Endothelial cell of umbilical vein (primary cell): ENCODE measurements at regions of chr1 and their contacts with region 1.

Region 1: GRCh38 chr1:72075425-72075824 is 206.9 kb downstream of the NEGR1 start:
- DNase-seq: no peak
- H3K4me3 ChIP-seq: no peak overlapping the region
- H3K27ac ChIP-seq: no peak overlapping the region
- H3K4me1 ChIP-seq: no peaks in the 10 kb centered on the region
- H3K27me3 ChIP-seq: no peaks in the 10 kb centered on the region
- CTCF ChIP-seq: no peak
- POLR2A ChIP-seq: no peak

Region 2: DNA sequence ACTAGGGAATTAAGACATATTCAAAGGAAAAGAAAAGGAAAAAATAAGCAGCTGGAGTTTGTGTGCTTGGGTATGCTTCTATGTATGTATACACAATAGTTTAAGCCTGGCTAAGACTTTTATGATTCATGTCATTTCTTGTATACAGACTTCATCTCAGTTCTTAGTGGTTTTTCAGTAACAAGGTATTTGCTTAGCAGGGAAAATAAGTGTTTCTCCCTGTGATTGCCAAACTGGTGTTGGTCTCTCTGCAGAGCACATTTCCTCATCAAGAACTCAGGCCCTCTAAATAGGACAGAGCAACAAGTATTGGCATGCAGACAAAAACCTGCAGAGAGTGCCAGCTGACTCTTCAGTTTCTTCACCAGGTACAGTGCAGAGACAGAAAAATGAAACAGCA is 510.2 kb before region 1 on chr1:
- CTCF ChIA-PET with region 1: no interaction called
- POLR2A ChIA-PET with region 1: no interaction called
- dilution Hi-C with region 1: no loop called
- intact Hi-C with region 1: no loop called
- DNase-seq: no peak
- H3K4me3 ChIP-seq: no peak overlapping the region
- H3K27ac ChIP-seq: no peak overlapping the region
- H3K4me1 ChIP-seq: no peaks in the 10 kb centered on the region
- H3K27me3 ChIP-seq: no peaks in the 10 kb centered on the region
- CTCF ChIP-seq: no peak
- POLR2A ChIP-seq: no peak

Region 3: GRCh38 chr1:72094209-72094608 is 18.8 kb after region 1 on chr1:
- CTCF ChIA-PET with region 1: interaction called, 13 read pairs
- POLR2A ChIA-PET with region 1: no interaction called
- dilution Hi-C with region 1: no loop called
- intact Hi-C with region 1: no loop called
- DNase-seq: no peak
- H3K4me3 ChIP-seq: no peak overlapping the region
- H3K27ac ChIP-seq: no peak overlapping the region
- H3K4me1 ChIP-seq: no peaks in the 10 kb centered on the region
- H3K27me3 ChIP-seq: no peaks in the 10 kb centered on the region
- CTCF ChIP-seq: no peak
- POLR2A ChIP-seq: no peak

Region 4: GRCh38 chr1:72122099-72122880 is 46.9 kb after region 1 on chr1:
- CTCF ChIA-PET with region 1: no interaction called
- POLR2A ChIA-PET with region 1: no interaction called
- dilution Hi-C with region 1: no loop called
- intact Hi-C with region 1: no loop called
- DNase-seq: no peak
- H3K4me3 ChIP-seq: no peak overlapping the region
- H3K27ac ChIP-seq: no peak overlapping the region
- H3K4me1 ChIP-seq: no peaks in the 10 kb centered on the region
- H3K27me3 ChIP-seq: no peaks in the 10 kb centered on the region
- CTCF ChIP-seq: no peak
- POLR2A ChIP-seq: no peak